ENCODE measurements at regions of chr22 and their contacts with region 1.

Region 1: GRCh38 chr22:37716708-37717107 is 19.9 kb downstream of the TRIOBP start:
- DNase-seq: no peak
- H3K4me3 Mint-ChIP-seq: no peak overlapping the region
- H3K27ac Mint-ChIP-seq: no peak overlapping the region
- H3K4me1 Mint-ChIP-seq: peaks cover 2% of the 10 kb centered on the region
- H3K27me3 Mint-ChIP-seq: no peaks in the 10 kb centered on the region

Region 2: GRCh38 chr22:37777122-37777687 is 60.5 kb after region 1 on chr22:
- CTCF ChIA-PET with region 1: no interaction called
- intact Hi-C with region 1: loop called (anchors 10 kb)
- DNase-seq: no peak
- H3K4me3 Mint-ChIP-seq: no peak overlapping the region
- H3K27ac Mint-ChIP-seq: no peak overlapping the region
- H3K4me1 Mint-ChIP-seq: no peaks in the 10 kb centered on the region
- H3K27me3 Mint-ChIP-seq: no peaks in the 10 kb centered on the region

Measured in activated naive CD4-positive, alpha-beta T cell treated with anti-CD3 and anti-CD28 coated beads for 36 hours (primary cell).